HepG2 (cell line): ENCODE measurements at regions of chr3 and their contacts with region 1.

Region 1: DNA sequence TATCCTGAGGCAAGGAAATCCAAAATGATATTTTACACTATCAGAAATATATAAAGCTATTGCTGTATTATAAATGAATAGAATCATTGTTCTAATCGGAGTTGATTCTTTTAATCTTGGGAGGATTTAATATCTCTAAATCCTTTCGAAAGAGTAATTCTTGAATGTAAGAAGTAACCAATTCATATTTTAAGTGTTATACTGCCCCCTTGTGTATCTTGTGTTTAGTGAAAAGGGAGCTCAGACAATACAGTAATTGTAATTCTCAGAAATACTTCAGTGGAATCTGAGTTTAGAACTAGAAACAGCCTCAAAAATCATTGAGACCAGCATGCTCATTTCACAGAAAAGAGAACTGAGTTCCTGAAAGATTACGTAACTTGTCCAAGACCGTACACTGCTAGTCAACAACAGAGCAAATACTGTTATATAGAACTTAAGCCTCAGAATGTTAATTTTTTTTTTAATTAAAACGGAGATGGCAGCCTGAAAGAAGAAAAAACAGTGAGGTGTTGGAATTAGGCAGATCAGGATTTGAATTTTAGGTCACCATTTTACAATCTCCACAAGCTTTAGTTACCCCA is 42.9 kb downstream of the PLCH1 start:
- DNase-seq: peak; percentile 62
- ATAC-seq: peak; percentile 44; the same call in 1 of the 3 replicates
- H3K4me3 ChIP-seq: no peak overlapping the region
- H3K27ac ChIP-seq: no peak overlapping the region
- H3K4me1 ChIP-seq: peaks cover 14% of the 10 kb centered on the region
- H3K27me3 ChIP-seq: no peaks in the 10 kb centered on the region
- CTCF ChIP-seq: peak; percentile 65
- EP300 ChIP-seq: no peak
- POLR2A ChIP-seq: no peak
- RAD21 ChIP-seq: peak; percentile 48

Region 2: GRCh38 chr3:155352900-155353490 is 349.0 kb before region 1 on chr3:
- CTCF ChIA-PET with region 1: interaction called, 14 read pairs
- POLR2A ChIA-PET with region 1: no interaction called
- in situ Hi-C with region 1: no loop called
- intact Hi-C with region 1: loop called (anchors 1 kb)
- DNase-seq: peak; percentile 21
- ATAC-seq: peak; percentile 34; the same call in 1 of the 3 replicates
- H3K4me3 ChIP-seq: no peak overlapping the region
- H3K27ac ChIP-seq: no peak overlapping the region
- H3K4me1 ChIP-seq: peaks cover 12% of the 10 kb centered on the region
- H3K27me3 ChIP-seq: no peaks in the 10 kb centered on the region
- CTCF ChIP-seq: peak; percentile 57
- EP300 ChIP-seq: no peak
- POLR2A ChIP-seq: no peak
- RAD21 ChIP-seq: no peak

Region 3: DNA sequence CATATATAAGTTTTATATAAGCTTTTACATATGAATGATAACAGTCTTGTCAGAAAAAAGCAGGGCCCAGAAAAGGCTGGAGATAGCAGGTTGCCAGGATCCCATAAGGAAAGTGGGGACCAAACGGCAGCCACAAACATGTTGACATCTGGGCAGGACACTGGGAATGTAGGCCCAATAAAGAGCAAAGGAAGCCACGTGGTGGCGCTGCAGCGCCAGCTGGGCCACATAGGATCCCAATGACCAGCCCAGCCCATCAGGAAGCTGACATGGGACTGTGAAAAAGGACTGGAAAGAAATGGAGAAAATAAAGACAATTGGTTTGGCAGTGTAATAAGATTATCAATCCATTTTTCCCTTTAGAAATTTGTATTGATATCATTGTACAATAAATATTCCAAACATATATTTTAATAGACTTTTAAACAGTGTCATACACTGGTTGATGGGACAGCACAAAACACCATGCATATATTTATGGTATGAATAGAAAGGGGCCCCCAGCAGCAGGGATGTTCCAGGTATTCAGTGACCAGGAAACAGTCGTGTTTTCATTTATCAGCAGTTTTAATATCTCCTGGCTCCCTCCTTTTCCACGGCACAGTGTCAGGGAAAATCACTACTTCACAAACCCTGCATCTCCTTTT is 319.5 kb before region 1 on chr3:
- CTCF ChIA-PET with region 1: interaction called, 61 read pairs
- POLR2A ChIA-PET with region 1: no interaction called
- in situ Hi-C with region 1: loop called (anchors 5 kb)
- intact Hi-C with region 1: loop called (anchors 1 kb)
- DNase-seq: peak; percentile 53
- ATAC-seq: peak; percentile 100
- H3K4me3 ChIP-seq: no peak overlapping the region
- H3K27ac ChIP-seq: no peak overlapping the region
- H3K4me1 ChIP-seq: no peaks in the 10 kb centered on the region
- H3K27me3 ChIP-seq: peaks cover 0 to 2% of the 10 kb centered on the region in 2 experiments; a peak in 1 of 5 replicates
- CTCF ChIP-seq: peak; percentile 93
- EP300 ChIP-seq: no peak
- POLR2A ChIP-seq: no peak
- RAD21 ChIP-seq: peak; percentile 90

Region 4: DNA sequence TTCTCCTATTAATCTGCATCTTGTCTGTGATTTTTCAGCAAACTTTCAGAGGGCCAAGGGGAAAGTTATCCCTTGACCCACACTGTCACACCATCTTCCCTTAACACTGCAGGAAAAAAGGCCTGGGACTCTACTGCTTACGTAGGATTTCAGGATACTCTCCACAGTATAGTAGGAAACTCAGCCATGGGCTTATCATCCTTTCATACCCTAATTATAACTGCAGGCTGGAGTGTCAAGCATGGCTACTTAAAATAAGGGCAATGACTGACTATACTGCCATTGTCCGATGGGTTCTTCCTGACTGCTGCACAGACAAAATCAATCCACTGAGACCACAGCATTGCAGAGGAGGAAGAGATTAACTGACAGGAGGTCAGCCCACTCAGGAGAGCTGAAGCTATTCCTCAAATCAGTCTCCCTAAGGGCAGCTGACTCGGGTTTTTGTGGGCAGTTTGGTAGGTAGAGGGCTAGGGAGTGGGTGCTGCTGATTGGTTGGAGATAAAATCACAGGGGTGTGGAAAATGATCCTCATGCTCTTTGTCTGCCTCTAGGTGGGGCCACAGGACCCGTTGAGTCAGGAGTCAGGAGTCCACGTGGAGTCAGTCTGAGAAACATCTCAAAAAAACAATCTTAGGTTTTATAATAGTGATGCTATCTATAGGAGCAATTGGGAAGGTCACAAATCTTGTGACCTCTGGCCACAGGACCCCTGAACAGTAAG is 290.3 kb before region 1 on chr3:
- CTCF ChIA-PET with region 1: interaction called, 3 read pairs
- POLR2A ChIA-PET with region 1: no interaction called
- in situ Hi-C with region 1: no loop called
- intact Hi-C with region 1: loop called (anchors 2 kb)
- DNase-seq: peak; percentile 24
- ATAC-seq: peak; percentile 69
- H3K4me3 ChIP-seq: no peak overlapping the region
- H3K27ac ChIP-seq: no peak overlapping the region
- H3K4me1 ChIP-seq: no peaks in the 10 kb centered on the region
- H3K27me3 ChIP-seq: no peaks in the 10 kb centered on the region
- CTCF ChIP-seq: peak; percentile 62
- EP300 ChIP-seq: no peak
- POLR2A ChIP-seq: no peak
- RAD21 ChIP-seq: no peak

Region 5: GRCh38 chr3:155420881-155421486 is 281.0 kb before region 1 on chr3:
- CTCF ChIA-PET with region 1: interaction called, 6 read pairs
- POLR2A ChIA-PET with region 1: no interaction called
- in situ Hi-C with region 1: no loop called
- intact Hi-C with region 1: loop called (anchors 2 kb)
- DNase-seq: peak; percentile 16
- ATAC-seq: peak; percentile 90
- H3K4me3 ChIP-seq: no peak overlapping the region
- H3K27ac ChIP-seq: no peak overlapping the region
- H3K4me1 ChIP-seq: no peaks in the 10 kb centered on the region; the same call in 1 of the 2 replicates
- H3K27me3 ChIP-seq: no peaks in the 10 kb centered on the region; a peak in 1 of 5 replicates
- CTCF ChIP-seq: 0 out of 2 replicates have a peak, but pooled peaks have one; percentile 17
- EP300 ChIP-seq: no peak
- POLR2A ChIP-seq: no peak
- RAD21 ChIP-seq: 0 out of 2 replicates have a peak, but pooled peaks have one; percentile 18